H1 (cell line): ENCODE measurements at regions of chr2 and their contacts with region 1.

Region 1: GRCh38 chr2:198645816-198646215 is 811.9 kb downstream of the SATB2 start:
- DNase-seq: no peak
- H3K4me3 ChIP-seq: no peak overlapping the region
- H3K27ac ChIP-seq: no peak overlapping the region
- H3K4me1 ChIP-seq: no peaks in the 10 kb centered on the region
- H3K27me3 ChIP-seq: no peaks in the 10 kb centered on the region
- CTCF ChIP-seq: no peak
- EP300 ChIP-seq: no peak
- POLR2A ChIP-seq: no peak
- RAD21 ChIP-seq: no peak

Region 2: DNA sequence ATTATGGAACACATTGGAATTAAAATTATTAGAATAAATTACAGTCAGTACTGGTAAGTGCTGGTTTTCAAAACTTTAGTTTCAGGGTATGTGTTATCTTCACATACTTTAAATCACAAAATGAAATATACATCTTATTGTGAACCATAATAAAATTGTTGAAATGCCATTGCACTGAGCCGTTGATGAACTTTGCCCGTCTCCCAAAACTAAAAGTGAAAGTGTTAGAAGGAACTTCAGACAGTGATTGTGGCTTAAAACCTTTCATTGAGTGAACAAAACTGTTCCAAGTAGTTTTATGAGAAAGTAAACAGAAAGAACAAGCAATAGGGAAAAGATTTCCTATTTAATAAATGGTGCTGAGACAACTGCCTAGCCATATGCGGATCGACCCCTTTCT is 29.8 kb before region 1 on chr2:
- CTCF ChIA-PET with region 1: no interaction called
- POLR2A ChIA-PET with region 1: no interaction called
- DNase-seq: no peak
- H3K4me3 ChIP-seq: no peak overlapping the region
- H3K27ac ChIP-seq: no peak overlapping the region
- H3K4me1 ChIP-seq: no peaks in the 10 kb centered on the region
- H3K27me3 ChIP-seq: no peaks in the 10 kb centered on the region
- CTCF ChIP-seq: no peak
- EP300 ChIP-seq: no peak
- POLR2A ChIP-seq: no peak
- RAD21 ChIP-seq: no peak

Region 3: GRCh38 chr2:198657512-198658121 is 11.8 kb after region 1 on chr2:
- CTCF ChIA-PET with region 1: interaction called, 14 read pairs
- POLR2A ChIA-PET with region 1: no interaction called
- DNase-seq: no peak
- H3K4me3 ChIP-seq: no peak overlapping the region
- H3K27ac ChIP-seq: no peak overlapping the region
- H3K4me1 ChIP-seq: no peaks in the 10 kb centered on the region
- H3K27me3 ChIP-seq: no peaks in the 10 kb centered on the region
- CTCF ChIP-seq: peak in 2 of 3 experiments; percentile 58 to 61; a peak in 3 of 4 replicates
- EP300 ChIP-seq: no peak
- POLR2A ChIP-seq: no peak
- RAD21 ChIP-seq: peak; percentile 62 to 66